HCT116 (cell line): ENCODE measurements at regions of chr14 and their contacts with region 1.

Region 1: GRCh38 chr14:76710056-76711010 is 50.9 kb upstream of the VASH1 start:
- DNase-seq: peak; percentile 24
- ATAC-seq: peak; percentile 84
- H3K4me3 ChIP-seq: no peak overlapping the region
- H3K27ac ChIP-seq: no peak overlapping the region
- H3K4me1 ChIP-seq: no peaks in the 10 kb centered on the region
- H3K27me3 ChIP-seq: no peaks in the 10 kb centered on the region
- CTCF ChIP-seq: peak; percentile 70 to 84 (median 76)
- POLR2A ChIP-seq: no peak
- RAD21 ChIP-seq: peak; percentile 74

Region 2: DNA sequence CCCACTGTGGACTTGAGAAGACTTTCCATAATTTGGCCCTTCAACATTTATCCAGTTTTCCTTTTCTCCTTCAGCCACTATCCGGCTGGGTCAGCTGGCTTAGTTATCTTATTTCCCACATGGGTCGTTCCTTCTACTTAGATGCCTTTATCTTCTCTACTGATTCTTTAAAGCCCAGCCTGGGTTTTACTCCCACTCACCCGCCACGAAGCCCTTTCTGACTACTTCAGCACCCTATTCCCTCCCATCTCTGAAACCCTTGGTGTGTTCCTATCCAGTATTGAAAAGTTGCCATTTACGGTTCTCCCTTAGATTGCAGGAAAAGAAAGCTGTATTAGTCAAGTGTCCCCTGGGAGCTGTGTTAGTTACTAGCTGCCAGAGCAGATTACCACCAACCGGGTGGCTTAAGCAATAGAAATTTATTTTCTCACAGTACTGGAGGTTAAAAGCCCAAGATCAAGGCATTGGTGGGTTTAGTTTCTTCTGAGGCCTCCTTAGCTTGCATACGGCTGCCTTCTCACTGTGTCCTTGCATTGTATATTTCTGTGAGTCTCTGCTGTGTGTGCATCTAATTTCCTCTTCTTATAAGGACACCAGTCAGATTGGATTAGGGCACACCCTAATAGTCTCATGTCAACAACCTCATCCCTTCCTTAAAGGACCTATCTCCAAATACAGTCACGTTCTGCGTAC is 453.1 kb before region 1 on chr14:
- CTCF ChIA-PET with region 1: no interaction called
- POLR2A ChIA-PET with region 1: no interaction called
- RAD21 ChIA-PET with region 1: no interaction called
- intact Hi-C with region 1: no loop called
- DNase-seq: no peak
- ATAC-seq: no peak
- H3K4me3 ChIP-seq: no peak overlapping the region
- H3K27ac ChIP-seq: no peak overlapping the region
- H3K4me1 ChIP-seq: no peaks in the 10 kb centered on the region
- H3K27me3 ChIP-seq: no peaks in the 10 kb centered on the region
- CTCF ChIP-seq: no peak
- POLR2A ChIP-seq: no peak
- RAD21 ChIP-seq: no peak

Region 3: DNA sequence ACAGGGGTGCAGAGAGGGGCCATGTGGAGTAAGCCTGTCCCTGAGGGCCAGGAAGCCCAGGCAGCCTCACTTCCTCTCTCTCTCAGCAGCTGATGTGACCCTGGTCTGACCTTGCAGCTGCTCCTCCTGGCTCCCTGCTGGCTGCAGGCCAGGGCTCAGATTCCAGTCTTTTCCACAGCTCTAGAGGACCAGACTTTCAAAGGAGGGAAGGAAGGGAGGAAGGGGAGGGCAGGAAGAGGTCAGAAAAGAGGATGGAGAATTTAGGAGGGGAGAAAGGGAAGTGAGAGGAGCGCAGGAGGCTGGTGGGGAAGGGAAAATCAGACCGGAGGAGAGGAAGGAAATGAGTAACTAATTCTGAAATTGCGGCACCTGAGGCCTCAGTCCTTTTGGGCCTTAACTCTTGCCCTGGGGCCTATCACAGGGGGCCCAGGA is 10.1 kb after region 1 on chr14:
- CTCF ChIA-PET with region 1: interaction called, 11 read pairs
- POLR2A ChIA-PET with region 1: no interaction called
- RAD21 ChIA-PET with region 1: no interaction called
- intact Hi-C with region 1: no loop called
- DNase-seq: no peak
- ATAC-seq: peak; percentile 54
- H3K4me3 ChIP-seq: no peak overlapping the region
- H3K27ac ChIP-seq: no peak overlapping the region
- H3K4me1 ChIP-seq: peaks cover 7 to 12% of the 10 kb centered on the region in 2 experiments; a peak in 3 of 4 replicates
- H3K27me3 ChIP-seq: 0 out of 2 replicates have a peak, but pooled peaks cover 4% of the 10 kb centered on the region
- CTCF ChIP-seq: no peak
- POLR2A ChIP-seq: no peak
- RAD21 ChIP-seq: no peak

Region 4: DNA sequence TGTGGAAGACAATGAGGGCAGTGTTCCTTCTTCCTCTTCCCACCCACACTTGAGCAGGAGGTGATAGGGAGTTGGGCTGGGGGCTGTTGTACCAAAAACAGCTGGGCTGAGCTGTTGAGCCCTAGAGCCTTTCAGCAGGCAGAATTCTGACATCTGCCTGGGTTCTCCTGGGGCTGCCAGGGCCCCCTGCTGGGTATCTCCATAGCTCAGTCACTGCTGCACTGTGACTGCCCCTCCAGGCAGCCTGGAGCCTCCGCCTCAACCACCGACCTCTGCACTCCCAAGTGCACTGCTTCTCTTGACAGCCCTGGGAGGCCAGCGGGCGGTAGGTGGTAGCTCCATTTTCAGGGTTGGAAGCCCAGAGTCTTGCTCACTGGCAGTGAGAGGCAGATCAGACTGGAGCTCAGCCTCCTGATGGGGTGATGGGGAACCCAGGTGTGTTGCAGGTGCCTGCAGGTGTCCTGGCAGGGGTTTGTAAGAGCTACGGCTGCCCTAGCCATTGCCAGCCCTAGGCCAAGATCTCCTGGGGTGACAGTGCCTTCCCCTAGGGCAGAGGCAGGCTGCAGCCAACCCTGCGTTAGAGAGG is 66.4 kb after region 1 on chr14:
- CTCF ChIA-PET with region 1: interaction called, 10 read pairs
- POLR2A ChIA-PET with region 1: no interaction called
- RAD21 ChIA-PET with region 1: no interaction called
- intact Hi-C with region 1: no loop called
- DNase-seq: no peak
- ATAC-seq: peak; percentile 47
- H3K4me3 ChIP-seq: no peak overlapping the region
- H3K27ac ChIP-seq: no peak overlapping the region
- H3K4me1 ChIP-seq: peaks cover 15 to 24% of the 10 kb centered on the region in 2 experiments
- H3K27me3 ChIP-seq: no peaks in the 10 kb centered on the region
- CTCF ChIP-seq: no peak
- POLR2A ChIP-seq: no peak
- RAD21 ChIP-seq: no peak

Region 5: GRCh38 chr14:76784266-76785264 is 74.2 kb after region 1 on chr14:
- CTCF ChIA-PET with region 1: interaction called, 38 read pairs
- POLR2A ChIA-PET with region 1: no interaction called
- RAD21 ChIA-PET with region 1: no interaction called
- intact Hi-C with region 1: loop called (anchors 1 kb)
- DNase-seq: peak; percentile 60
- ATAC-seq: peak; percentile 100
- H3K4me3 ChIP-seq: no peak overlapping the region
- H3K27ac ChIP-seq: no peak overlapping the region
- H3K4me1 ChIP-seq: no peaks in the 10 kb centered on the region
- H3K27me3 ChIP-seq: no peaks in the 10 kb centered on the region
- CTCF ChIP-seq: peak; percentile 97 to 99 (median 98)
- POLR2A ChIP-seq: no peak
- RAD21 ChIP-seq: peak; percentile 80

Region 6: DNA sequence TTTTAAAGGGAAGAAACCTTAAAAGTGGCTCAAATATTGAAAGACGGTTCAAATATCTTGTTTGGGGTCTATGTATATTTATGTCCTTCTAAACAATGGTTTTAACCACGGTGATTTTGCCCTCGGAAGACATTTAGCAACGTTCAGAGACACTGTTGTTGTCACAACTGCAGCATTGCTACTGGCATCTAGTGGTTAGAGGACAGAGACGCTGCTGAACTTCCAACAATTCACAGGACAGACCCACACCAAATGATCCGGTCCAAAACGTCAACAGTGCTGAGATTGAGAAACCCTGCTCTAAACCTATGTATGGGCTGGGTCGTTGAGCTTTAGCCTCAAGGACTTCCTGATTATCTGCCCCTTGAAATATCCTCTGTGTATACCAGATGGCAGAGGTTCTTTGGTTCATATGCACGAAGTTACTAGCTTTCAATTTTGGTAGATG is 100.6 kb after region 1 on chr14:
- CTCF ChIA-PET with region 1: interaction called, 12 read pairs
- POLR2A ChIA-PET with region 1: no interaction called
- RAD21 ChIA-PET with region 1: no interaction called
- intact Hi-C with region 1: no loop called
- DNase-seq: peak; percentile 13
- ATAC-seq: peak; percentile 42
- H3K4me3 ChIP-seq: peak overlapping the region; percentile 22 to 74; a peak in 3 of 4 replicates
- H3K27ac ChIP-seq: no peak overlapping the region
- H3K4me1 ChIP-seq: peaks cover 9 to 20% of the 10 kb centered on the region in 2 experiments
- H3K27me3 ChIP-seq: no peaks in the 10 kb centered on the region
- CTCF ChIP-seq: peak; percentile 32 to 63 (median 58); a peak in 5 of 6 replicates
- POLR2A ChIP-seq: no peak
- RAD21 ChIP-seq: peak; percentile 43

Region 7: DNA sequence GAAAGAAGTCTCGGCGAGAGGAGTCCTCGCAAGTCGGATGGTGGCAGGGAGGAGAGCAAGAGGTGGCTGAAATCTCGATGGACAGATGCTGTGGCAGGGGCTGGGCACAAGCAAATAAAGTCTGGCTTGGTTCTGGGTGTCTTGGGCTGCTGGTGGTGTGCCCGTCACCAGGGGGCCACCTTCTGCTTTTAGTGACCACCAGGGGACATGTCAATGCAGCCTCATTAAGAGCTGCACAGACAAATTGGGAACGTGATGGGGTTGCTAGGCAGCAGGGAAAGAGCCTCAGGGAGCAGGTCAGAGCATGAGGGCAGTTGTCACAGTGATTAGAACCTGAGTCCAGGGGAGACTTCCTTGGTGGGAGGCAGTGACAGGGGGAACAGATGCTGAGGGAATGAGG is 159.8 kb after region 1 on chr14:
- CTCF ChIA-PET with region 1: interaction called, 9 read pairs
- POLR2A ChIA-PET with region 1: no interaction called
- RAD21 ChIA-PET with region 1: no interaction called
- intact Hi-C with region 1: loop called (anchors 2 kb)
- DNase-seq: no peak
- ATAC-seq: peak; percentile 74
- H3K4me3 ChIP-seq: no peak overlapping the region
- H3K27ac ChIP-seq: no peak overlapping the region
- H3K4me1 ChIP-seq: no peaks in the 10 kb centered on the region
- H3K27me3 ChIP-seq: no peaks in the 10 kb centered on the region
- CTCF ChIP-seq: peak; percentile 47 to 61 (median 49); a peak in 5 of 6 replicates
- POLR2A ChIP-seq: no peak
- RAD21 ChIP-seq: peak; percentile 39; the same call in 1 of the 2 replicates

Region 8: DNA sequence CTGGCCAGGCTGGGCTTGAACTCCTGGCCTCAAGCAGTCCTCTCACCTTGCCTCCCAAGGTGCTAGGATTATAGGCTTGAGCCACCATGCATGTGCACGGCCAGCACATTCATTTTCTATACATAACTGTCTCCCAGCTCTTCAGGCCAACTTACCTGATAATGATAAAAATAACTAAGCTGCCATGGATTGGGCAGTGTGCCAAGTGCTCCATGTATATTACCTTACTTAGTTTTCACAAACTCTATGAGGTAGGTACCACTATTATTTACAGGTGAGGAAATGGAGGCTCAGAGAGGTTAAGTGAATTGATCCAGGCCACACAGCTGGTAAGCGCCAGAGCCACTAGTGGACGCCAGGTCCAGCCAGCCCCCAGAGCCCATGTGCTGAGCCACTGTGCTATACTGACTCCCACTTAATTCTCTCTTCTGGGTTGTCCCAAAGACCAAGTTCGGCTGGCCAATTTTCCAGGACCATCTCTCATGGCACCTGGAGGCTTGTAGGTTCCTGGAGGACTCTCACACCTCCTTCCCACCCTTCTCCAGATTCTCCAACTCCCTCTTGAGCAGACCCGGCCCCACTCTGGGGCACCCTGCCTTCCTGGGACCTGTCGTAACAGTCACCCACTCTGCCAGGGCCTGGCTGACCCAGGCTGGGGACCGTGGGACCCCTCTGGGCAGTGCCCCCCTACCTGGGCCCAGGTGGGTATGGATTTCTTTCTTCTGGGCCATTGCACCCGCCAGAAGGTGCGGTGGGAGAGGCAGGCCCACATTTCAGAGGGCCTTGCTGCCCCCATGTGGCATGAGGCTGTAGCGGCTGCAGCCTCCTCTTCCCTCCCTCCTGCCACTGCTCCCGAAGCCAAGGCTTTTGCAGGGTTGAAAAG is 357.5 kb after region 1 on chr14:
- CTCF ChIA-PET with region 1: no interaction called
- POLR2A ChIA-PET with region 1: no interaction called
- RAD21 ChIA-PET with region 1: no interaction called
- intact Hi-C with region 1: loop called (anchors 10 kb)
- DNase-seq: peak; percentile 42
- ATAC-seq: peak; percentile 83
- H3K4me3 ChIP-seq: no peak overlapping the region
- H3K27ac ChIP-seq: no peak overlapping the region; the same call in 1 of the 2 replicates
- H3K4me1 ChIP-seq: peaks cover 21 to 34% of the 10 kb centered on the region in 2 experiments
- H3K27me3 ChIP-seq: no peaks in the 10 kb centered on the region
- CTCF ChIP-seq: peak; percentile 87 to 97 (median 95)
- POLR2A ChIP-seq: no peak
- RAD21 ChIP-seq: peak; percentile 99